Heart right ventricle (tissue), 16 donors: ENCODE measurements at regions of chr7 and their contacts with region 1.

Region 1: GRCh38 chr7:67484244-67484751 is 487.7 kb downstream of the TYW1 start:
- DNase-seq: peak; percentile 21 to 59
- ATAC-seq: peak; percentile 57 to 81 (median 66)
- H3K4me3 ChIP-seq: peak overlapping the region in 8 of 10 donors; percentile 14 to 44 (median 32)
- H3K27ac ChIP-seq: no peak overlapping the region
- H3K4me1 ChIP-seq: peaks cover 0 to 12% (median 6%) of the 10 kb centered on the region in 9 donors
- H3K27me3 ChIP-seq: peaks cover 0 to 5% (median 0%) of the 10 kb centered on the region in 7 donors
- CTCF ChIP-seq: peak; percentile 61 to 85 (median 74)

Region 2: GRCh38 chr7:67619175-67619574 is 134.9 kb after region 1 on chr7:
- intact Hi-C with region 1: loop called in 2 of 10 experiments (anchors 2 to 10 kb)
- DNase-seq: peak; percentile 19 to 35
- ATAC-seq: peak in 6 of 8 donors; percentile 51 to 92 (median 67)
- H3K4me3 ChIP-seq: peak overlapping the region in 1 of 10 donors; percentile 24
- H3K27ac ChIP-seq: peak overlapping the region in 7 of 10 donors; percentile 1 to 77 (median 58)
- H3K4me1 ChIP-seq: peaks cover 0 to 43% (median 10%) of the 10 kb centered on the region in 9 donors
- H3K27me3 ChIP-seq: peaks cover 0 to 67% (median 29%) of the 10 kb centered on the region in 7 donors
- CTCF ChIP-seq: peak in 3 of 9 donors; percentile 23 to 39 (median 24)

Region 3: GRCh38 chr7:67625257-67625737 is 141.0 kb after region 1 on chr7:
- intact Hi-C with region 1: loop called in 2 of 10 experiments (anchors 2 to 10 kb)
- DNase-seq: peak; percentile 77 to 84
- ATAC-seq: peak; percentile 85 to 95 (median 89)
- H3K4me3 ChIP-seq: peak overlapping the region in 5 of 10 donors; percentile 17 to 38 (median 33)
- H3K27ac ChIP-seq: no peak overlapping the region
- H3K4me1 ChIP-seq: peaks cover 0 to 8% (median 0%) of the 10 kb centered on the region in 9 donors
- H3K27me3 ChIP-seq: peaks cover 0 to 59% (median 31%) of the 10 kb centered on the region in 7 donors
- CTCF ChIP-seq: peak; percentile 81 to 94 (median 86)

Region 4: DNA sequence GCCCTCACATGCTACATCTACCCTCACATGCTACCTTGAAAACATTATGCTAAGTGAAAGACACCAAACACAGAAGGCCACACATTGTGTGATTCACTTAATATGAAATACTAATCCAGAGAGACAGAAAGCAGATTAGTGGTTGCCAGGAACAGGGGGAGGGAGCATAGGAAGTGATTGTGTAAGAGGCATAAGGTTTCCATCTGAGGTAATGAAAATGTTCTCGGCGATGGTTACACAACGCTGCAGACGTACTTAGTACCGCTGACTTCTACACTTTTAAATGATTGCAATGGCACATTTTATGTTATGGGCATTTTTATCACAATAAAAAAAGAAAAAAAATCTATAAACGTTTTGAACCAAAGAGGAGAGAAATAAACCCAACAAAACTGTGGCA is 254.7 kb after region 1 on chr7:
- intact Hi-C with region 1: no loop called
- DNase-seq: peak in 1 of 2 donors; percentile 26
- ATAC-seq: peak; percentile 59 to 97 (median 74)
- H3K4me3 ChIP-seq: no peak overlapping the region
- H3K27ac ChIP-seq: no peak overlapping the region
- H3K4me1 ChIP-seq: no peaks in the 10 kb centered on the region
- H3K27me3 ChIP-seq: peaks cover 0 to 5% (median 0%) of the 10 kb centered on the region in 7 donors
- CTCF ChIP-seq: no peak

Region 5: GRCh38 chr7:68158686-68159295 is 674.5 kb after region 1 on chr7:
- intact Hi-C with region 1: loop called in 1 of 10 experiments (anchors 5 kb)
- DNase-seq: no peak
- ATAC-seq: no peak
- H3K4me3 ChIP-seq: no peak overlapping the region
- H3K27ac ChIP-seq: no peak overlapping the region
- H3K4me1 ChIP-seq: no peaks in the 10 kb centered on the region
- H3K27me3 ChIP-seq: peaks cover 0 to 22% (median 7%) of the 10 kb centered on the region in 7 donors
- CTCF ChIP-seq: no peak